SK-N-SH (cell line): ENCODE measurements at regions of chr11 and their contacts with region 1.

Region 1: GRCh38 chr11:123110356-123110755 is 48.4 kb upstream of the HSPA8 start:
- DNase-seq: no peak
- H3K4me3 ChIP-seq: no peak overlapping the region
- H3K27ac ChIP-seq: no peak overlapping the region
- H3K4me1 ChIP-seq: peaks cover 4 to 21% of the 10 kb centered on the region in 2 experiments; a peak in 3 of 4 replicates
- H3K27me3 ChIP-seq: no peaks in the 10 kb centered on the region
- CTCF ChIP-seq: no peak
- EP300 ChIP-seq: no peak
- RAD21 ChIP-seq: no peak

Region 2: DNA sequence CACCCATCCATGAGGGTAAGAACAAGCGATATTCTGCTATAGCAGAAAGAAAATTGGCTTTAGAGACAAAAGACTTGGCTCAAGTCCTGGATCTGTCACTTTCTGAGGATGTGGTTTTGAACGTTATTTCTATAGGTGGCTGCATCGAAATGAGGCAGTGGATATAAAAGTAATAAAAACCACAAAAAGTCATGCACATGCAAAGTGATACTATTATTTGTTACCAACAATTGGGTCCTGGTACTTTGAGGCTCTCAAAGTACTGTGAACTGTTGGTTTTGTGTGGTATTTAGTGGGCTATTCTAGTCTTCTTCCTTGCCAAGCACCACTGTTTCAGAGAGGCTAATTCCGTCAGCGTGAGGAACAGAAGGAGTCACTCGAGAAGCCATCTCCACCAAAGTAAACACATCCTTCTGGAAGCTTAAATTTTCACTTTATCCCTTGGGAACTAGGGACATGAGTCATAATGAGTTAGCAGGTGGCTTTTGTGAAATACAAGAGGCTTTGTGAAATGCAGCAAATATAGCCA is 441.7 kb before region 1 on chr11:
- CTCF ChIA-PET with region 1: no interaction called
- POLR2A ChIA-PET with region 1: no interaction called
- DNase-seq: no peak
- H3K4me3 ChIP-seq: no peak overlapping the region
- H3K27ac ChIP-seq: no peak overlapping the region
- H3K4me1 ChIP-seq: peaks cover 0 to 3% of the 10 kb centered on the region in 2 experiments; a peak in 1 of 4 replicates
- H3K27me3 ChIP-seq: no peaks in the 10 kb centered on the region
- CTCF ChIP-seq: no peak
- EP300 ChIP-seq: no peak
- RAD21 ChIP-seq: no peak

Region 3: GRCh38 chr11:123137431-123138224 is 27.3 kb after region 1 on chr11:
- CTCF ChIA-PET with region 1: interaction called, 26 read pairs
- POLR2A ChIA-PET with region 1: no interaction called
- DNase-seq: peak; percentile 85
- H3K4me3 ChIP-seq: peak overlapping the region; percentile 6 to 40; a peak in 1 of 4 replicates
- H3K27ac ChIP-seq: peak overlapping the region in 1 of 2 experiments; percentile 99; a peak in 2 of 4 replicates
- H3K4me1 ChIP-seq: peaks cover 14 to 52% of the 10 kb centered on the region in 2 experiments
- H3K27me3 ChIP-seq: no peaks in the 10 kb centered on the region
- CTCF ChIP-seq: peak; percentile 39
- EP300 ChIP-seq: peak; percentile 46 to 70; a peak in 3 of 4 replicates
- RAD21 ChIP-seq: peak; percentile 28

Region 4: DNA sequence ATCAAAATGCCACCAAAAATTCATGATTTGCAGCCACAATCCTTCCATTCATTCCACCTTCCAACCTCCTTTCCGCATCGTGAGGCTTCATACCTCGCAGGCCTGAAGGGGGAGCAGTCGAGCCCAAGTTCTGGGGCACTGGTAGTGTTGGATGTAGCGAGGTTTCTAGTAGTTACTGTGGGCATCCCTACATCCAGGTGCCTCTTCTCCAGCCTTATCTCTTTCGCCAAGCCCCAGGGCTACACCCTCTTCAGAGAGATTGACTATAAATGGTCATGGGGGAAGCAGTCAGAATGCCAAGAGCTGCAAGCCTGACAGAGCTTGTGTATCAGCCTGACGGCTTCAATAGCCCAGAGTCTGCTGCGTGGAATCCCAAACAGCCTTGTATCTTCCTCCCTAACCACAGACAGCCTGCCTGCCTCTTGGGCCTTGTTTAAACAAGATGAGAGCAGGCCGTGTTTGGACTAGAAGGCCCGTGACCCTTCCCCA is 55.8 kb after region 1 on chr11:
- CTCF ChIA-PET with region 1: interaction called, 18 read pairs
- POLR2A ChIA-PET with region 1: no interaction called
- DNase-seq: peak; percentile 64
- H3K4me3 ChIP-seq: no peak overlapping the region
- H3K27ac ChIP-seq: peak overlapping the region; percentile 33 to 83; a peak in 3 of 4 replicates
- H3K4me1 ChIP-seq: peaks cover 17 to 39% of the 10 kb centered on the region in 2 experiments; a peak in 2 of 4 replicates
- H3K27me3 ChIP-seq: no peaks in the 10 kb centered on the region
- CTCF ChIP-seq: peak; percentile 75
- EP300 ChIP-seq: 0 out of 4 replicates have a peak, but pooled peaks of 1 of the 2 experiments have one; percentile 14
- RAD21 ChIP-seq: peak; percentile 72

Region 5: GRCh38 chr11:123195188-123196059 is 85.1 kb after region 1 on chr11 and contains the start of gene CLMP:
- CTCF ChIA-PET with region 1: interaction called, 10 read pairs
- POLR2A ChIA-PET with region 1: interaction called, 3 read pairs
- DNase-seq: peak; percentile 91
- H3K4me3 ChIP-seq: peak within 1 kb of the TSS; percentile 72 to 85
- H3K27ac ChIP-seq: peak within 1 kb of the TSS; percentile 81 to 97
- H3K4me1 ChIP-seq: peaks cover 34 to 37% of the 10 kb centered on the region in 2 experiments
- H3K27me3 ChIP-seq: no peaks in the 10 kb centered on the region
- CTCF ChIP-seq: no peak
- EP300 ChIP-seq: peak; percentile 0 to 43; a peak in 1 of 4 replicates
- RAD21 ChIP-seq: no peak
- polyA plus RNA-seq, gene CLMP: 61.9 and 85.1 TPM in 2 replicates

Region 6: GRCh38 chr11:123261345-123262106 is 151.2 kb after region 1 on chr11:
- CTCF ChIA-PET with region 1: interaction called, 102 read pairs
- POLR2A ChIA-PET with region 1: no interaction called
- DNase-seq: peak; percentile 85
- H3K4me3 ChIP-seq: peak overlapping the region in 1 of 2 experiments; percentile 24; a peak in 2 of 4 replicates
- H3K27ac ChIP-seq: no peak overlapping the region
- H3K4me1 ChIP-seq: peaks cover 6 to 18% of the 10 kb centered on the region in 2 experiments; a peak in 2 of 4 replicates
- H3K27me3 ChIP-seq: no peaks in the 10 kb centered on the region
- CTCF ChIP-seq: peak; percentile 96
- EP300 ChIP-seq: no peak
- RAD21 ChIP-seq: peak; percentile 84